Caco-2 (cell line): ENCODE measurements at regions of chr11 and their contacts with region 1.

Region 1: GRCh38 chr11:108654994-108655631 is 9.8 kb upstream of the DDX10 start:
- DNase-seq: peak; percentile 64 to 74
- H3K4me3 ChIP-seq: no peak overlapping the region
- H3K4me3 Mint-ChIP-seq: no peak overlapping the region
- H3K27ac Mint-ChIP-seq: no peak overlapping the region
- H3K4me1 ChIP-seq: no peaks in the 10 kb centered on the region
- H3K4me1 Mint-ChIP-seq: no peaks in the 10 kb centered on the region
- H3K27me3 ChIP-seq: no peaks in the 10 kb centered on the region
- H3K27me3 Mint-ChIP-seq: peaks cover 6% of the 10 kb centered on the region
- CTCF ChIP-seq: peak; percentile 87 to 92

Region 2: DNA sequence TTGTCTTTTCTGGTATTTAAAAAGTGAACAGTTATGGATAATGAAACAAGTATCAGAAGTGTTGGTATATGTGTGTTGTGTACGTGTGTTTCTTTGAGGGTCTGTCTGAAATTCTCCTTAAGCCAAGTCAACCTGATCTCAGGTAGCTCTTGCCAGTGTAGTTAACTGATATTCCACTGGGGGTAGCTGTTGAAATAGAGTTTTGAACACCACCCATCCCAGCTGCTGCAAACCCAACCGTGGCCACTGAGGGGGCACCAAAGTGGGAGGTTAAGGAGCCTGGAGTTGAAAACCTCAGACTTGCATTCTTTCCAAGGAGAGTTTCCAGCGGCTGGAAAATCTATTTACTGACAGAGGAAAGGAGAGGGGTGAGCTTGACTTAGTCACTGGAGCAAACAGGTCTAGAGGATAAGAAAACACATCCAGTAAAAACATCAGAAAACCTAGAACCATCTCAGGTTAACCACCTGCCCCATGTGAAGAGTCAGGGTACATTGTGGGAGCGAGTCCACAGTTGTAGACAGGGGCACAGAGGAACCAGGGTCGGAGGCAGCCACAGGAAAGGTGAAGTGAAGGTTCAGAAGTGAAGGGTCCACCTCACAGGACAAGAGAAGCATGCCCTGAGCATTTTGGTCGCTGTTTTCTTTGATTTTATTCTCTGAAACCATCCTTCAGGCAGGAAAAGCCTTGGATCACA is 655.2 kb before region 1 on chr11:
- CTCF ChIA-PET with region 1: interaction called, 5 read pairs
- POLR2A ChIA-PET with region 1: no interaction called
- intact Hi-C with region 1: loop called (anchors 2 kb)
- DNase-seq: peak; percentile 81 to 85
- H3K4me3 ChIP-seq: no peak overlapping the region
- H3K4me3 Mint-ChIP-seq: no peak overlapping the region
- H3K27ac Mint-ChIP-seq: no peak overlapping the region
- H3K4me1 ChIP-seq: 0 out of 2 replicates have a peak, but pooled peaks cover 3% of the 10 kb centered on the region
- H3K4me1 Mint-ChIP-seq: peaks cover 6% of the 10 kb centered on the region
- H3K27me3 ChIP-seq: peaks cover 1% of the 10 kb centered on the region; the same call in 1 of the 2 replicates
- H3K27me3 Mint-ChIP-seq: peaks cover 10% of the 10 kb centered on the region
- CTCF ChIP-seq: peak; percentile 84 to 93

Region 3: GRCh38 chr11:108121274-108122155 is 533.6 kb before region 1 on chr11 and contains the start of gene ACAT1:
- CTCF ChIA-PET with region 1: interaction called, 3 read pairs
- POLR2A ChIA-PET with region 1: no interaction called
- intact Hi-C with region 1: loop called (anchors 1 kb)
- DNase-seq: peak; percentile 98 to 100
- H3K4me3 ChIP-seq: peak within 1 kb of the TSS; percentile 88
- H3K4me3 Mint-ChIP-seq: peak within 1 kb of the TSS; percentile 81
- H3K27ac Mint-ChIP-seq: peak within 1 kb of the TSS; percentile 66
- H3K4me1 ChIP-seq: peaks cover 13% of the 10 kb centered on the region
- H3K4me1 Mint-ChIP-seq: peaks cover 27% of the 10 kb centered on the region
- H3K27me3 ChIP-seq: no peaks in the 10 kb centered on the region
- H3K27me3 Mint-ChIP-seq: no peaks in the 10 kb centered on the region
- CTCF ChIP-seq: peak; percentile 54 to 67
- total RNA-seq, gene ACAT1: 131 and 134 TPM in 2 replicates

Region 4: DNA sequence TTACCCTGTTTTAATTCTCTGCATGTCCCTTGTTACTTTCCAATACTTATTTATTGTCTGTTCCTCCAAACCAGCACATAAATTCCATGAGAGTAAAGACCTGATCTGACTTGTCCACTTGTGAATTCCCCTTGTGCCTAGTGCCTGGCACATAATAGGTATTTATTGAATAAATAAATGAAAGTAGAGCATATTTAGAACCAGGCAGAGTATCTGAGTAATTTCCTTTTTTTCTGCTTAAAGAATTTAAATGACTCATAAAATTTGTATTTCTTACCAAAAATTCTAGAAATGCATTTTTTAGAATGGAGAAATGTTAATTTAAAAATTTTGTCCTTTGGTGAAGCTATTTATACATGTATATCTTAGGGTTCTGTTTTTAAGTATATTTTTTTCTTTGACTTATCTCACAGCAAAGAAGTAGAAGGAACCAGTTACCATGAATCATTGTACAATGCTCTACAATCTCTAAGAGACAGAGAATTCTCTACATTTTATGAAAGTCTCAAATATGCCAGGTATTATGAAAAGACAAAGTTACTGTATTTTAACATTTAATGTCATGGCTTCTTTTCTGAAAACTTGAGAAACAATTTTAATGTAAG is 335.5 kb before region 1 on chr11:
- CTCF ChIA-PET with region 1: no interaction called
- POLR2A ChIA-PET with region 1: no interaction called
- intact Hi-C with region 1: loop called (anchors 10 kb)
- DNase-seq: no peak
- H3K4me3 ChIP-seq: no peak overlapping the region
- H3K4me3 Mint-ChIP-seq: no peak overlapping the region
- H3K27ac Mint-ChIP-seq: no peak overlapping the region
- H3K4me1 ChIP-seq: peaks cover 10% of the 10 kb centered on the region
- H3K4me1 Mint-ChIP-seq: peaks cover 9% of the 10 kb centered on the region
- H3K27me3 ChIP-seq: no peaks in the 10 kb centered on the region
- H3K27me3 Mint-ChIP-seq: no peaks in the 10 kb centered on the region
- CTCF ChIP-seq: no peak

Region 5: DNA sequence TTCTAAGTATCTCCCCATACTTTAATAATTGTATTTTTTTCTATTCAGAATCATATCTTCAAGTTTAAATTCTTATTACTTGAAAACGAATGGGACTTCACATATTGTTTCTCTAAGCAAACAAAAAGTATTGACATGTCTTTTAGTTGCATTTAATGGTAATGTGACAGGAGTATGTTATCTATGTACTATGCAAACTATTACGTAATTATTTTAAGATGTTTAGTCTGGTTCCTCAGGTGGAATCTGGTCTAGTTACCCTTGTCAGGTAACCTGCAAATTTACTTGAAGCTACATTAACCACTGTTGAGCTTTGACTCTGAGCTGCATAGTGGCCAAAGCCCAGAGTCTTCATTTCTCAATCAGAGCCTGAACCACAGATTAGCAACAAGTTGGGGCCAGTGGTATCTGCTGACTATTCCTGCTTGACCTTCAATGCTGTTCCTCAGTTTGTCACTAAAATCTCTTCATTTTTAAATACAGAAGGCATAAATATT is 321.7 kb before region 1 on chr11:
- CTCF ChIA-PET with region 1: no interaction called
- POLR2A ChIA-PET with region 1: interaction called, 3 read pairs
- intact Hi-C with region 1: loop called (anchors 5 kb)
- DNase-seq: peak in 1 of 2 experiments; percentile 50
- H3K4me3 ChIP-seq: no peak overlapping the region
- H3K4me3 Mint-ChIP-seq: no peak overlapping the region
- H3K27ac Mint-ChIP-seq: no peak overlapping the region
- H3K4me1 ChIP-seq: peaks cover 7% of the 10 kb centered on the region
- H3K4me1 Mint-ChIP-seq: no peaks in the 10 kb centered on the region
- H3K27me3 ChIP-seq: no peaks in the 10 kb centered on the region
- H3K27me3 Mint-ChIP-seq: no peaks in the 10 kb centered on the region
- CTCF ChIP-seq: no peak

Region 6: DNA sequence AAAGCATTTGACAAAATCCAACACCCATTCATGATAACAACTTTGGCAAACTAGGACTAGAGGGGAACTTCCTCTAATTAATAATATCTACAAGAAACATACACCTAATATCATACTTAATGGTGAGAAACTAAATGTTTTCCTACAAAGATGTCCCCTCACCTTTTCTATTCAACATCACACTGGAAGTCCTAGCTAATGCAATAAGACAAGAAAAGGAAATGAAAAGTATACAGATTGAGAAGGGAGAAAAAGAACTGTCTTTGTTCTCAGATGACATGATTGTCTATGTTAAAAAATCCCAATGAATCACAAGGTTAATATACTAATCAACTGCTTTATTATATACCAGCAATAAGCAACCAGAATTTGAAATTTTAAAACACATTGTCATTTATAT is 240.2 kb before region 1 on chr11:
- CTCF ChIA-PET with region 1: no interaction called
- POLR2A ChIA-PET with region 1: no interaction called
- intact Hi-C with region 1: loop called (anchors 1 kb)
- DNase-seq: no peak
- H3K4me3 ChIP-seq: no peak overlapping the region
- H3K4me3 Mint-ChIP-seq: no peak overlapping the region
- H3K27ac Mint-ChIP-seq: no peak overlapping the region
- H3K4me1 ChIP-seq: no peaks in the 10 kb centered on the region
- H3K4me1 Mint-ChIP-seq: no peaks in the 10 kb centered on the region
- H3K27me3 ChIP-seq: no peaks in the 10 kb centered on the region
- H3K27me3 Mint-ChIP-seq: peaks cover 3% of the 10 kb centered on the region
- CTCF ChIP-seq: no peak